ENCODE measurements at regions of chr19 and their contacts with region 1.

Region 1: DNA sequence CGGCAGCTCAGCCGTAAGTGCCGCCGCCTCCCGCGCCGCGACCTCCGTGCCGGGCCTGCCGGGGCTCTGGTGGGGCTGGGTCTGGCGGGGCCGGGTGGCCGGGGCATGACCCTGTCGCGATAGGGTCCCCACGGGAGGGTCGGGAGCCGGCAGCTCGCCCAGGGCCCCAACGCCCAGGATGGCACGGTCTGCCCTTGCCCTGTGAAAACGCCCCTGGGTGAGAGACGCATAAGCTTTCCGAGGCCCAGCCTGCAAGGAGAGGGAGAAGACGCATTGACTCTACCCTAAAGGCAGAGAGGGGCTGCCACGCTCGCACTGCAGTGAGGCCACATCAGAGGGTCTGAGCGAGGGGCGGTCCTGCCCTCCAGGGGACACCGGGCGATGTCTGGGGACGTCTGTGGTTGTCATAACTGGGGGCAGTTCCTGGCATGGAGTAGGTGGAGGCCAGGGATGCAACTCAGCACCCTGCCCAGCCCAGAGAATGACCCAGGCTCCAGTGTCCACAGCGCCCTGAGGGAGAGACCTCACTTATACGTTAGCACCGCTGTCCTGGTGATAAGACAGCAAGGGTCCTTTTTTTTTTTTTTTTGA is 539 bp downstream of the ZNF554 start:
- DNase-seq: no peak
- H3K4me3 ChIP-seq: peak overlapping the region; percentile 75
- CTCF ChIP-seq: no peak

Region 2: GRCh38 chr19:2804156-2805004 is 15.8 kb before region 1 on chr19:
- CTCF ChIA-PET with region 1: interaction called, 14 read pairs
- POLR2A ChIA-PET with region 1: no interaction called
- DNase-seq: no peak
- H3K4me3 ChIP-seq: no peak overlapping the region
- CTCF ChIP-seq: no peak